GM18951 (cell line): ENCODE measurements at regions of chr7 and their contacts with region 1.

Region 1: DNA sequence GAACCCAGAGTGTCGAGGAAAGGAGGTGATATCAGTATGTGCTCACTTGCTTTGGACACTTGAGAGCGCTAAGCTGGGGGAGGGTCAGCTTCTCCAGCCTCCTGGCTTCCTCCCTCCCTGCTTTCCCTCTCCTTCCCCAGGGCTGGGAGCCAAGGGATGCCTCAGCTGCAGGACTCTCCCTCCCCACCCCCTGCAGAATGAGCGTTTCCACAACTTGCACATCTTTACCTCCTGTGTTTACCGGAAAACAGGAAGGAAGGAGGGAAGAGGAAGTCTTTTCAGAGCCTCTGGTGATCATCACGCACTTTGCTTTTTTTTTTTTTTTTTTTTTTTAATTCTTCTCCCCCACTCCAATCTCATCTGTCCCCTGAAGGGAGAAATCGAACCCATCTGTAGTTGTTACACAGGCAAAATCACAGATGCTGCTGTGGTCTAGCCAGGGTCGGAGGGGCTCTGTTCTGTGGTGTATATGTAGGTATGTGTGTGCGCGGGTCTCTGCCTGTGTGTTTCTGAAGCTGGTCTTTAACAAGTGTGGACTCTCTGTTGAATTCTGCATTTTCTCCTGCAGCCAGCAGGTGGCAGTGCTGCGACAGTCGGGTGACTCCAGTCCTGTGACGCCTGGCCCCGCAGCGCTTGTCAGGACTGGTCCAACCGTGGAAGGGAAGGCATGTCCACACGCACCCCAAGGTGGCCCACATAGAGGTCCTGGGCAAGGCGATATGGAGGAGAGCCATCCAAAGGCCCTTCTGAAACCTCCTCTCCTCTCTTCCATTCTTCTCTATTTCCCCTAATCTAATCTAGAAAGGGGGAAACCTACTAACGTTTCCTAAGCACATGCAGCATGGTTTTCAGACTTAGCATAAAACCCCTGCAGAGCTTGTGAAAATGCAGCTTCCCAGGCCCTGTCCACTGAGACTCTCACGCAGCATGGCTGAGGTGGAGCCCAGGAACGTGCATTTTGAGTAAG is 257.6 kb downstream of the PLXNA4 start:
- POLR2A ChIP-seq: no peak

Region 2: DNA sequence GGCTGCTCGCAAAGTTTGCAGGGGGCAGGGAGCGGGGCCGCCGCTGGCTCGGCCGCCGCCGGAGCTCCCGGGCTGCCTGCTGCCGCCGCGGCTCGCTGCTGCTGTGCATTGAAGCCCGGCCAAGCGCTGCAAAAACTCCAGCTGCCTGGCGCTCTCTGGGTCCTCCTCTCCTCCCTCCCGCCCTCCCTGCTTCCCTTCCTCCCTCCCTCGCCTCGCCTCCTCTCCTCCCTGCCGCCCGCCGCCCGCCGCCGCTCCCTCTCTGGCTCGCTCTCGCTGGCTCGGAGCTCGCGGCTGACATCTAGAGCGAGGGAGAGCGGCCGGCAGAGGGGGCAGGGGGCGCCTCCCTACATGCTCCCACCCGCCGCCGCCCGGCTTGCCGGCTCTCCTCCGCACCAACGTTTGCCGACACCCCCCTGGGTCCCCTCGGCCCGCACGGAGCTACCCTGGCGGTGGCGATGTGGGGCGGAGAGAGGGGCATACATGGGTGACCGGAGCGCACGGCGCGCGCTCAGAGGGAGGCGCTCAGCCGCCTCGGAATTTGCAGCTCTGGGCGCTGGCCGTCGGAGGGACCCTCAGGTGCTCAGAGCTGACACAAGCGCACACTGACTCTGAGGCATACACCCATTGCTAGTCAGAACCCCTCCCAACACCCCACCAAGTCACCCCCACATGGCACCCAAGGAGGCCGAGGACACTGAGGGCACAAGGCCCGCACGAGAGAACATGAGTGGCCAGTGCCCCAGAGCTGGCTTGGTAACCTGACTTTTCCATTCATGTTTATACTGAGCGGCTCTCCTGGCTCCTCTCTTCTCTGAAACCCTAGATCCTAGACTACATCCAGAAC is 258.8 kb after region 1 on chr7:
- in situ Hi-C with region 1: loop called (anchors 10 kb)
- POLR2A ChIP-seq: no peak

Region 3: DNA sequence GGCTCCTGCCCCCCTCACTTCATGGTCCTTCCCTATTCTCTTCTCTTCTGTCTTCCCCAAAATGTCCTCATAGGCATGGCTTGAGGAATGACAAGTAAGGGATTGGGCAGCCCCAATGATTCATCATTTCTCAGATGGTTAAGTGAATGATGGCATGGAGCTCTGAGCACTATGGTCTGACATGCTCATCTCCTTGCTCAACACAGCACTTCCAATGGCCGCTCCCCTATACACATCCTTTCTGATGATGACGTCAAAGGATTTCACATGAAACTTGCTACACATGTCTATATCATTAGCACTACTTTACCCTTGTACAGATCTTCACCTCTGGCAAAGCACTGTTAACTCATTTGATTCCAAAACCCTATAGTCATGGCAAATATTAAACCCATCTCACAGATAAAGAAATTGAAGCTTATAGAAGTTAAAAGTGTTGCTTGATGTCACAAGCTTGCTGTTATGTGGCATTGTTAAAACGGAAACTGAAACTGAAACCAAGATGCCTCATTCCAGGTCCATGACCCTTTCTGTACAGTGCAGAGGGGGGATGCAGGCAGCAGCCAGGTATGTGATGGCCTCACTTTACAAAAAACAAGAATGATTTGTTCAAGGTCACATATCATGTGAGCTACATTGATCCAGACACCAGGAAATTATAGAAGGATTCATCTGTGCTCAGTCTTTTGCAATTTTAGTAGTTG is 347.6 kb after region 1 on chr7:
- in situ Hi-C with region 1: no loop called
- POLR2A ChIP-seq: no peak